Gastrocnemius medialis (tissue), 4 donors: ENCODE measurements at regions of chr10 and their contacts with region 1.

Region 1: GRCh38 chr10:29590915-29591650 is 43.7 kb downstream of the SVIL start:
- DNase-seq: no peak
- ATAC-seq: no peak
- H3K4me3 ChIP-seq: peak overlapping the region in 1 of 4 donors; percentile 16
- H3K27ac ChIP-seq: peak overlapping the region; percentile 95 to 96 (median 96)
- H3K4me1 ChIP-seq: peaks cover 84 to 91% of the 10 kb centered on the region in 2 donors
- H3K27me3 ChIP-seq: no peaks in the 10 kb centered on the region
- CTCF ChIP-seq: peak in 1 of 5 experiments; percentile 24
- POLR2A ChIP-seq: no peak

Region 2: GRCh38 chr10:28564905-28565304 is 1026.2 kb before region 1 on chr10:
- in situ Hi-C with region 1: no loop called
- intact Hi-C with region 1: no loop called
- DNase-seq: no peak
- ATAC-seq: no peak
- H3K4me3 ChIP-seq: no peak overlapping the region
- H3K27ac ChIP-seq: no peak overlapping the region
- H3K4me1 ChIP-seq: peaks cover 55 to 59% of the 10 kb centered on the region in 2 donors
- H3K27me3 ChIP-seq: no peaks in the 10 kb centered on the region
- CTCF ChIP-seq: no peak
- POLR2A ChIP-seq: no peak

Region 3: DNA sequence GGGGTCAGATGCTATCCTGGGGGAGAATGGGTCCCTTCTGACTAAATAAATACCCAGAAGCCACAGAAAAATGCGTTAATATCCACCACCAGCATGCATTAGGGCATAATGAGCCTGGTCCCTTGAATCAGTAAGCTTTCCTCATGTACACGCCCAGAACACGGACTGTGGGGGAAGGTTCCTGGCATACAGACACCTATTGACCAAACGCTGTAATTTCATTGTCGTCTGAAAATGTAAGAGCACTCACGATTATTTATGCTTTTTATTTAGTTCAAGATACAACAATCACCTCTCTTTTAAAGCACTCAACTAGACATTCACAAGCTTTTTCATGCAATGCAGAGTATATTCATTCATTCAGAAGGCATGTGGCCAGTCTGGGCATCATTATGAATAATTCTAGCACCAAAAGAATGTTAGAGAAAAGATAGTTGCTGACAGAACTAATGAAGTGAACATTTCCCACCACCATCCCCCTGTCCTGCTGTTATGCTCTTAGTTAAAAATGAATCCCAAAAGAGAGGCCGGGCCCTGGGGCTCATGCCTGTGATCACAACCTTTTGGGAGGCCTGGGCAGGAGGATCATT is 57.3 kb before region 1 on chr10:
- in situ Hi-C with region 1: no loop called
- intact Hi-C with region 1: loop called (anchors 5 kb)
- DNase-seq: peak in 1 of 2 donors; percentile 10
- ATAC-seq: no peak
- H3K4me3 ChIP-seq: no peak overlapping the region
- H3K27ac ChIP-seq: peak overlapping the region; percentile 82 to 90 (median 87)
- H3K4me1 ChIP-seq: peaks cover 72 to 81% of the 10 kb centered on the region in 2 donors
- H3K27me3 ChIP-seq: no peaks in the 10 kb centered on the region
- CTCF ChIP-seq: no peak
- POLR2A ChIP-seq: no peak

Region 4: DNA sequence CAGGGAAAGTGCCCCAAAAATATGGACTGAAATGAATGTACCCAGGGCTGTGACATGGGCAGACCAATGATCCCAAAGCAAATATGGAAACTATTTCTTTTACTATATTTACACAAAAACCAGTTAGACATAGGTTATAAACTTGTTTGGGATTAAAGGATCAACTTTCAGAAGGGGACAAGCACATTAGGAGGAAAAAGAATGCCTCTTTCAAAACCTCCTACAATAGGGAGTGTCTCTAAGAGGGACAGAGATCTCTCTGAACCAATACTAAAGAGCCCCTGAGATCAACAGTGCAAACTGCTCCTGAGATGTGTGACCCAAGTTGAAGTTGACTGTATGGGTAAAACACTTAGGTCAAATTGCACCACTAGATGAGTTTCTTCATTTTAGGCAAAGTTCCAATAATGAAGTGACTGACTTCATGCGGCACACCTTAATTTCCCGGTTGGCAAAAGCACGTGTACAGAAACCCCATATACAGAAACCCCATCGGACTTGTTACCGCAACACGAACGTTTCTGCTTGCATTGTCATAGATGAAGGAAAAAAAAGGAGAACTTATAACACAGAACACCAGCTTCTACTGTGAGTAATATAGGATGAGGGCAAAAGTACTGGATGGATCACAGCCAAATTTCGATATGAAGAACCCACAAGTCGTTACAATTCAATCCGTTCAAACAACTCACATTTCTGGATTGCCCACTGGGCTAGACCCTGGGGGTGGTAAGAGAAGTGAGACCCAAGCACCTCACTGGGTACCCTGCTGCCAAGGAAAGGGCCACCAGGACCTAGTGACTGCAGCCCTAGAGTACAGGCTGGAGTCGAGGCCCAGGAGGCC is 39.3 kb after region 1 on chr10:
- in situ Hi-C with region 1: no loop called
- intact Hi-C with region 1: loop called (anchors 2 kb)
- DNase-seq: peak in 1 of 2 donors; percentile 46
- ATAC-seq: peak; percentile 39 to 49
- H3K4me3 ChIP-seq: peak overlapping the region; percentile 52 to 73 (median 63)
- H3K27ac ChIP-seq: peak overlapping the region; percentile 95 to 96 (median 96)
- H3K4me1 ChIP-seq: peaks cover 24 to 30% of the 10 kb centered on the region in 2 donors
- H3K27me3 ChIP-seq: no peaks in the 10 kb centered on the region
- CTCF ChIP-seq: no peak
- POLR2A ChIP-seq: peak; percentile 70 to 78